Panc1 (cell line): ENCODE measurements at regions of chr14 and their contacts with region 1.

Region 1: DNA sequence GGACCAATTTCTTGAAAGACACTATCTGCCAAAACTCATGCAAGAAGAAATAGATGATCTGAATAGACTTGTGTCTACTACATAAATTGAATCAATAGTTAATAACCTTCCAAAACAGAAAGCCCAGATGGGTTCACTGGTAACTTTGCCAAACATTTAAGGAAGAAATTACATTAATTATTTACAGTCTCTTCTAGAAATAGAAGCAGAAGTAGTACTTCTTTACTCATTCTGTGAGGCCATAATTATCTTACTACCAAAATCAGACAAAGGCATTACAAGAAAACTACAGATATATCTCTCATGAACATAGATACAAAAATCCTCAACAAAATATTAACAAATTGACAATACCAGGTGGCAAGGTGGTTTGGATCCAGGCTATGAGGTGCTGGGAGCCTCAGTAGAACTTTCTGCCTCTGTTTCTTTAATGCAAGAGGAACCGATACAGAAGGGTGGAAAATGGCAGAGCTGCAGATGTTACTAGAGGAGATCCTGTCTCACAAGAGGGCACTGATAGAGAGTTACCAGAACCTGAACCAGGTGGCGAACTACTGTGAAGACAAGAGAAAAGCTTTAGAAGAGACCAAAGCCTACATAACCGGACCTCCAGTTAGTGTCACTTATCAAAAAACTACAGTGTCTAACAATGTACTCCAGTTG is 33.7 kb upstream of the KTN1 start:
- DNase-seq: no peak
- ATAC-seq: no peak
- H3K4me3 ChIP-seq: no peak overlapping the region
- H3K27ac ChIP-seq: peak overlapping the region; percentile 26; the same call in 1 of the 2 replicates
- H3K4me1 ChIP-seq: peaks cover 13% of the 10 kb centered on the region
- H3K27me3 ChIP-seq: no peaks in the 10 kb centered on the region
- CTCF ChIP-seq: no peak

Region 2: DNA sequence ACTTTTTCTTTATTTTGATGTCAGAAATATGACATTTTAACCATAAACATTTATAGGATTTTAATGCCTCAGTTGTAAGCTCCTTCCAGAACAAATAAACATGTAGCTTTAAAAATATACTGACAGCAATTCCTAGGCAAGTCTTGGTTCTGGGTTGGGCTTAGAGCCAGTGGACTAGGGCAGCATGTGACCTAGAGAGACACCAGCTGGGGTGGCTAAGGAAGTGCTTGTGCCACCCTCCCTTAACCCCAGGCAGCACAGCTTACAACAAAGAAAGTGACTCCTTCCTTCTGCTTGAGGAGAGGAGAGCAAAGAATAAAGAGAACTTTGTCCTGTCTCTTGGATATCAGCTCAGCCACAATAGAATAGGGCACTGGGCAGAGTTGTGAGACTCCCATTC is 28.0 kb before region 1 on chr14:
- CTCF ChIA-PET with region 1: no interaction called
- POLR2A ChIA-PET with region 1: no interaction called
- in situ Hi-C with region 1: no loop called
- intact Hi-C with region 1: no loop called
- DNase-seq: no peak
- ATAC-seq: no peak
- H3K4me3 ChIP-seq: no peak overlapping the region
- H3K27ac ChIP-seq: peak overlapping the region; percentile 46
- H3K4me1 ChIP-seq: peaks cover 18% of the 10 kb centered on the region
- H3K27me3 ChIP-seq: no peaks in the 10 kb centered on the region
- CTCF ChIP-seq: no peak

Region 3: DNA sequence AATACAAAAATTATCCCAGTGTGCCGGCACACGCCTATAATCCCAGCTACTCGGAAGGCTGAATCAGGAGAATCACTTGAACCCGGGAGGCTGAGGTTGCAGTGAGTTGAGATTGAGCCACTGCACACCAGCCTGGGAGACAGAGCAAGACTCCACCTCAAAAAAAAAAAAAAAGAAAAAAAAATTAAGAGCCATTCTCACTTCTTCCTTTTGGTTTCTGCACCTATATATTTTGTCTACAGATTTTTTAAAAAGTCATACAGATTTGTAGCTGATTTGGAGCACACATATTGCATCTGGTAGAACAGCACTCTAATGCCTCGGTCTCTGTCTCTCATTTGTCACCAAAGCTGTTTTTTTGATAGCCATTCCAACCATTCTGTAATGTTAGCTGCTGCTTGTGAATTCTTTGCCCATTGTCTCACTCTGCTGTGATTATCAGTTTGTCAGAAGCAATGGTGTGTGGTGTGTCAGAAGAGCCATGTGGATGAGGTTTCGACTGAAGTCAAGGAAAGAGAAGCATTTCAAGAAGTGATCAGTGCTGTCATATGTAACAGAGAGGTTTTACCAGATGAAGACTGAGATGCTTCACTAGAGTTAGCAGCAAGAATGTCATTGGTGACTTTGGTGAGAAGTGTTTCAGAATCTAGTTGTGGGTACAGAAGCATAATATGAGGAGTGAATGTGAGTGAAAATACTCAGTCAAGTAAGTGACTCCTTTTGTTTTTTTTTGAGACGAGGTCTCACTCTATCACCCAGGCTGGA is 25.0 kb after region 1 on chr14:
- CTCF ChIA-PET with region 1: no interaction called
- POLR2A ChIA-PET with region 1: interaction called, 10 read pairs
- in situ Hi-C with region 1: no loop called
- intact Hi-C with region 1: no loop called
- DNase-seq: no peak
- ATAC-seq: no peak
- H3K4me3 ChIP-seq: no peak overlapping the region
- H3K27ac ChIP-seq: peak overlapping the region; percentile 76
- H3K4me1 ChIP-seq: peaks cover 21% of the 10 kb centered on the region
- H3K27me3 ChIP-seq: no peaks in the 10 kb centered on the region
- CTCF ChIP-seq: no peak